PC-9 (cell line): ENCODE measurements at regions of chr19 and their contacts with region 1.

Region 1: DNA sequence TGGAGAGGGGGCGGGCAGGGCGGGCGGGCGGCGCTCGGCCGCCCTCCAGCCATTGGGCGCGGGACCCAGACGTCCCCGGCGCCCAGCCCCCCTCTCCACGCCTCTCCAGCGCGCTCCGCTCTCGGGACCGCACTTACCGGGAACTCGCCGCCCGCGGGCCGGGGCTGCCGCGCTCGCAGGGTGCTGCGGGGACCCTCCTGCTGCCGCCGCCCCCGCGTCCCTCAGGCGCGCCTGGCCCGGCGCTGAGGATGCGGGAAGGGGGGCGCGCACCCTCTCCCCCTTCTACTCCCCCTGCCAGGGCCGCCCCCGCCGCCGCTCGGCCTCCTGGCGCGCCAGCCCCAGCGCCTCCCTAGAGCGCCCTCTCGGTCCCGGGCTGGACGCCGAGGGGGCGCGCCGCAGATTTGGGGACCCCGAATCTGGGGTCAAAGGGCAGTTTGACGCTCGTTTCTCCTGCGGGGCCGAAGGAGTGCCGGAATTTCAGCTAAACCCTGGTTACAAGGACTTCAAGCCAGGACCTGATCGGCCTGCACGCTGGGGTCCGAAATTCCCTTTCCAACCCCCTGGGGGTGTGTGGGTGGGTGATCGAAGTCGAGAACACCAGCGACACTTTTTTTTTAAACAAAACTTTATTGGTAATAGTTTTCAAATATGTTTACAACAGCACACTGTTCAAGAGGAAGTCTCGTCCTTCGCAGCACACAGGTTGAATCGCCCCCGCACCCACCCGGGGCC is 696 bp upstream of the SAMD1 start:
- DNase-seq: peak; percentile 75 to 82
- H3K4me3 ChIP-seq: peak overlapping the region; percentile 98
- H3K27ac ChIP-seq: peak overlapping the region; percentile 50
- H3K4me1 ChIP-seq: peaks cover 8% of the 10 kb centered on the region
- H3K27me3 ChIP-seq: no peaks in the 10 kb centered on the region
- CTCF ChIP-seq: peak; percentile 45; the same call in 1 of the 2 replicates

Region 2: DNA sequence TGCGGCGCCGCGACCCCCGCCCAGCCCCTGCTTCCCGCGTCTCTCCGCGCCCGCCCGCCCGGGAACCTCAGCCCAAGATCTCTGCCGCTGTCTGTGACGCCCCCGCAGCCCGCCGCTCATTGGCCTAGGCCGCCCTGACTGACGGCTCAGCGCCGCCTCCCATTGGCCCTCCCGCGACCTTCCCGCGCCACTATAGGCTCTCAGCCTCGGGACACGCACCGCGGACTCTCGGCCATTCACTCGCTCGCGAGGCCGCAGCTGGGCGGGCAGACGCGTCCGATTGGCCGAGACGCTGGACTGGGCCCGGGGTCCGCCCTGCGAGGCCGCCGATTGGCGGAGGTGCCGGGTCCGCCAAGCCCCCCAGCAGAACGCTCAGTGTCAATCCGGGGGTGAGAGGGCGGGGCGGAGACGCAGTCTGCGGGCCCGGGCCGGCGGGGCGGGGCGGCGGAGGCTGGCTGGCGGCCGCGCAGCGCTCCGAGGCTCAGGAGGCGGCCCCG is 26.5 kb after region 1 on chr19 and contains the start of gene PRKACA:
- CTCF ChIA-PET with region 1: no interaction called
- POLR2A ChIA-PET with region 1: no interaction called
- intact Hi-C with region 1: loop called (anchors 2 kb)
- DNase-seq: peak; percentile 97 to 99
- H3K4me3 ChIP-seq: peak within 1 kb of the TSS; percentile 82
- H3K27ac ChIP-seq: peak within 1 kb of the TSS; percentile 65
- H3K4me1 ChIP-seq: peaks cover 21% of the 10 kb centered on the region
- H3K27me3 ChIP-seq: no peaks in the 10 kb centered on the region
- CTCF ChIP-seq: no peak
- total RNA-seq, gene PRKACA: 62.0 and 82.8 TPM in 2 replicates

Region 3: GRCh38 chr19:14419106-14419813 is 328.0 kb after region 1 on chr19 and contains the start of gene DDX39A:
- CTCF ChIA-PET with region 1: no interaction called
- POLR2A ChIA-PET with region 1: no interaction called
- intact Hi-C with region 1: no loop called
- DNase-seq: peak; percentile 96 to 99
- H3K4me3 ChIP-seq: peak within 1 kb of the TSS; percentile 68
- H3K27ac ChIP-seq: peak within 1 kb of the TSS; percentile 69
- H3K4me1 ChIP-seq: peaks cover 23% of the 10 kb centered on the region
- H3K27me3 ChIP-seq: no peaks in the 10 kb centered on the region
- CTCF ChIP-seq: no peak
- total RNA-seq, gene DDX39A: 66.5 and 67.4 TPM in 2 replicates

Region 4: DNA sequence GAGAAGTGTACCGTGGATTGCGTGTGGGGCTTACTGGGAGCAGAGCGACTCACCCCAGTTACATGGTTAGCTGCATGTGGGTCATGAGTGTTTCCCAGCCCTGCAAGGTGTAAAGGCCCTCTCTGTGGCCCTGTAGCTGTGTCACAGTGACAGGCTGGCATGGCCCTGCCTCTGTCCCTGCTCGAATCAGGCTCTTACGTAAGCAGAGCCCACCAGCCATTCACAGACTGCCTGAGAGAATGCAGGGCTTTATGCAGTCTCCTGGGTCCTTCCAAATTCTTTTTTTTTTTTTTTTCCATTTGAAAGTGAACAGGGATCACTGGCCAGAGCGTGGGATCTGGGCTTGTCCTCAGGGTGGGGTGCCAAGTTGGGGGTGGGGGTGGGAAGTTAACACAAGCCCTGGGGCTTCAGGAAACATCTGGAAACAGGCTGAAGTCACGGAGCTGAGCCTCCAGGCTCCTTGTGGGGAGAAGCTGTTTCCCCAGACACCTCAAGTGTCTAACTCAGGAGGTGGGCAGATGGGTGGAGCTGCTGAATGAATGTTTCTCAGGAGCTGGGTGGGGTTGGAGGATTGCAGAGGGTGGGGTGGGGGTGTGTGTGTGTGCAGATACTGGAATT is 451.6 kb after region 1 on chr19:
- CTCF ChIA-PET with region 1: interaction called, 21 read pairs
- POLR2A ChIA-PET with region 1: no interaction called
- intact Hi-C with region 1: no loop called
- DNase-seq: peak in 1 of 2 experiments; percentile 56
- H3K4me3 ChIP-seq: no peak overlapping the region
- H3K27ac ChIP-seq: no peak overlapping the region
- H3K4me1 ChIP-seq: peaks cover 3% of the 10 kb centered on the region
- H3K27me3 ChIP-seq: no peaks in the 10 kb centered on the region
- CTCF ChIP-seq: no peak